B cell (primary cell): ENCODE measurements at regions of chr1 and their contacts with region 1.

Region 1: DNA sequence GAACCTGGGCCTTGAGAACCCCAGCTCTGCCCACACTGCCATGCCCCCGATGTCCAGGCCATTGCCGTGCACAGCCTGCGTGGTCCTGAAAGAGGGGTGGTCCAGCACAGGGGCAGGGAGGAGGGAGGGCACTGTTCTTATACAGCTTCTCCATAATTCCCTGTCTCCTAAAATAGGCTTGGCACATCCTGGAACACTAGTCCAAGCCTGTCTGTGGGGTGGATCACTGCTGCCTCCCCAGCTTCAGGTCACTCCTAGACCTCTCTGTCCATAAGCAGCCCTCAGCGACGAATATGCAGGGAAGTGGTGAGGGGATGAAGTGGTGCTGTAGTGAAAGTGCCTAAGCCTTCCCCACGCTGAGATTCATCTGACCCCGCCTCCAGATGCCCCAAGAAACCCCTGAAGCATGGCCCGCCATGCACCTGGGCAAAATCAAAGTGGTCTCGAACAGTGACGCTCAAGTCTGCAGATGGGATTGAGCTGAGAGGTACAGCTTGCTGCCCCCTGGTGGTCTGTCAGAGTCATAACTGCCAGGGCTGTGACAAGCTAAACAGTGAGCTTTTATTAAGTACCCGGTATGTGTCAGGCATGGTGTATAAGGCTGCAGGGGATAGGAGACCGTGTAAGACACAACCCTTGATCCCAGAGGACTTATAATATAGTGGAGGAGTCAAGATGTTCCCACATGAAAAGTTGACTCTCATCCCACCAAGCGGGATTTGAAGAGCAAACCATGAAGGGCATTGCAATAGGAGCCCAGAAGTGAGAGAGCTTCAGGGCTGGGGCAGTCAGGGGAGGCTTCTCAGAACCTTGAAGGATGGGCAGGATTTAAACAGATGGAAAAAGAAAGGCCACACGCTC is 66.6 kb downstream of the FAM163A start:
- DNase-seq: peak; percentile 78
- ATAC-seq: peak; percentile 70
- H3K4me3 ChIP-seq: no peak overlapping the region
- H3K4me3 Mint-ChIP-seq: no peak overlapping the region
- H3K27ac ChIP-seq: no peak overlapping the region
- H3K27ac Mint-ChIP-seq: no peak overlapping the region
- H3K4me1 ChIP-seq: peaks cover 6 to 13% of the 10 kb centered on the region in 2 donors
- H3K4me1 Mint-ChIP-seq: peaks cover 7% of the 10 kb centered on the region
- H3K27me3 ChIP-seq: peaks cover 0 to 15% (median 4%) of the 10 kb centered on the region in 4 experiments
- H3K27me3 Mint-ChIP-seq: peaks cover 21% of the 10 kb centered on the region
- CTCF ChIP-seq: peak; percentile 90

Region 2: DNA sequence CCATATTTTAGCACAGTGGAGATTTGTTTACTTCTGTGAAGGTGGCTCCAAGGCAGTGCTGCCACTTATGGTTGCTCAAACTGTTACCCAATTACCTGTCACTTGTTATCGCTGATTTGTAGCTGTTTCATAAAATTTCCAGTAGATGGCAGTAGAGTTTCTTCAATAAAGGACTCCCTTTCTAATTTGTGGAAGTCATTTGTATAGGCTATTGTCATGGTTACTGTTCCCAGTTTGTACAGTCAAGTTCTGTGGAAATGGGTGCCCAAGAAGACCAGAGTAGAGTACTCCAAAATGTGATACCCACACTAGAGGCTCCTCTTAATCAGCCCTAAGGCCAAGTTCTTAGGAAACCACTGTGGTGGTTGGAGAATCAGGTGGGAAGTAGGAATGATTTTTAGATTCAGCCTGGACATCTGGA is 1499.0 kb before region 1 on chr1:
- CTCF ChIA-PET with region 1: interaction called, 44 read pairs
- POLR2A ChIA-PET with region 1: no interaction called
- intact Hi-C with region 1: no loop called
- DNase-seq: peak; percentile 70
- ATAC-seq: peak; percentile 45
- H3K4me3 ChIP-seq: no peak overlapping the region
- H3K4me3 Mint-ChIP-seq: no peak overlapping the region
- H3K27ac ChIP-seq: no peak overlapping the region
- H3K27ac Mint-ChIP-seq: no peak overlapping the region
- H3K4me1 ChIP-seq: no peaks in the 10 kb centered on the region
- H3K4me1 Mint-ChIP-seq: no peaks in the 10 kb centered on the region
- H3K27me3 ChIP-seq: peaks cover 0 to 3% (median 0%) of the 10 kb centered on the region in 4 experiments
- H3K27me3 Mint-ChIP-seq: peaks cover 10% of the 10 kb centered on the region
- CTCF ChIP-seq: peak; percentile 82

Region 3: DNA sequence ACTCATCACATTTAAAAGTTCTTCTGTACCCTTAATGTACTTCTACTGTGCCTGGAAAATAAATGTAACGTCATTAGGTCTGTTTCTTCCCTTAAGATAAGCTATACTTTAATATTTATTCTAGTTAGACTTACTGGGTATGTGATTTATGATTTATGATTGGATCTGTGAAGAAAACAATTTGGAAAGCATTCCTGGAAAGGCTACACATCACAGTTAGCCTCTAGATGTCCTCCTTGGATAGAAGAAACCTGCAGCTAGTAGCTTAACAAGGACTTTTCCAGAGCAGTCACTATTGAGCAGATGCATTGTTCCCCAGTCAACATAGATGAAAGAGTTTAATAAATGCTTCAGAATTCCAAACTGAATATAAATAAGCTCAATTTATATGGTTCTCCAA is 558.1 kb before region 1 on chr1:
- CTCF ChIA-PET with region 1: interaction called, 15 read pairs
- POLR2A ChIA-PET with region 1: no interaction called
- intact Hi-C with region 1: no loop called
- DNase-seq: no peak
- ATAC-seq: no peak
- H3K4me3 ChIP-seq: no peak overlapping the region
- H3K4me3 Mint-ChIP-seq: no peak overlapping the region
- H3K27ac ChIP-seq: no peak overlapping the region
- H3K27ac Mint-ChIP-seq: no peak overlapping the region
- H3K4me1 ChIP-seq: no peaks in the 10 kb centered on the region
- H3K4me1 Mint-ChIP-seq: no peaks in the 10 kb centered on the region
- H3K27me3 ChIP-seq: no peaks in the 10 kb centered on the region
- H3K27me3 Mint-ChIP-seq: no peaks in the 10 kb centered on the region
- CTCF ChIP-seq: no peak

Region 4: DNA sequence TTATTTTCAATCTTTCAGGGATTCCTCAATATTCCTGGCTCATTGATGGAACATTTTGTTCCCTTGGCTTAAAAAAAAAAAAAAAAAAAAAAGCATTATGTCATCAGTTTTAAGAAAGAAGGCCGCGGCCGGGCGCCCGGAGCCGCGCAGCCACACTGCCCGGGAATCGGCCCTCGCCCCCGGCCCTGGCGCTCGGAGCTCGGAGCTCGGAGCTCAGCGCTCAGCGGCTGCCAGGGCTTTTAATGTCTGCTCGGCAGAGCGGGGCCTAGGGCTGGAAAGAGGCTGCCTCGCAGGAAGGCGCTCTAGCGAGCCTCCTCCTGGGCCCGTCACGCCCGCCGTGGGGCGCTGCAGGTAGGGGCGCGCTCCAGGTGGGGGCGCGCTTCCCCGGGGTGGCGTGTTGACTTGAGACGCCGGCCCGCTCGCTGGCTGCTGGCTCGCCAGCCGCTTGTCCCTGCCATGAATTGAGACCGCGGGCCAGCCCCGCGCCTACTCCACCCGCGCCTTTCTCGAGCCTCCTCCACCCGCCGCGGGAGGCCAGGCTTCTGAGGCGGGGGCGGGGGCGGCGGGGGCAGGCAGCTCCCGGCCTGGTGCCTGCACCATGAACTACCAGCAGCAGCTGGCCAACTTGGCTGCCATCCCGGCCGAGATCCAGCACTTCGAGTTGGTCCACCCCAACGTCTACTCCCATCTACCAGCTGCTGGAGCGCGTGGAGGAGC is 223.5 kb before region 1 on chr1:
- CTCF ChIA-PET with region 1: no interaction called
- POLR2A ChIA-PET with region 1: no interaction called
- intact Hi-C with region 1: no loop called
- DNase-seq: no peak
- ATAC-seq: no peak
- H3K4me3 ChIP-seq: no peak overlapping the region
- H3K4me3 Mint-ChIP-seq: no peak overlapping the region
- H3K27ac ChIP-seq: no peak overlapping the region
- H3K27ac Mint-ChIP-seq: no peak overlapping the region
- H3K4me1 ChIP-seq: no peaks in the 10 kb centered on the region
- H3K4me1 Mint-ChIP-seq: no peaks in the 10 kb centered on the region
- H3K27me3 ChIP-seq: peaks cover 0 to 23% (median 7%) of the 10 kb centered on the region in 4 experiments
- H3K27me3 Mint-ChIP-seq: peaks cover 59% of the 10 kb centered on the region
- CTCF ChIP-seq: no peak

Region 5: GRCh38 chr1:179706339-179706941 is 103.3 kb before region 1 on chr1:
- CTCF ChIA-PET with region 1: interaction called, 89 read pairs
- POLR2A ChIA-PET with region 1: no interaction called
- intact Hi-C with region 1: no loop called
- DNase-seq: peak; percentile 44
- ATAC-seq: no peak
- H3K4me3 ChIP-seq: no peak overlapping the region
- H3K4me3 Mint-ChIP-seq: no peak overlapping the region
- H3K27ac ChIP-seq: no peak overlapping the region
- H3K27ac Mint-ChIP-seq: no peak overlapping the region
- H3K4me1 ChIP-seq: no peaks in the 10 kb centered on the region
- H3K4me1 Mint-ChIP-seq: peaks cover 3% of the 10 kb centered on the region
- H3K27me3 ChIP-seq: peaks cover 0 to 3% (median 0%) of the 10 kb centered on the region in 4 experiments
- H3K27me3 Mint-ChIP-seq: peaks cover 25% of the 10 kb centered on the region
- CTCF ChIP-seq: peak; percentile 76

Region 6: DNA sequence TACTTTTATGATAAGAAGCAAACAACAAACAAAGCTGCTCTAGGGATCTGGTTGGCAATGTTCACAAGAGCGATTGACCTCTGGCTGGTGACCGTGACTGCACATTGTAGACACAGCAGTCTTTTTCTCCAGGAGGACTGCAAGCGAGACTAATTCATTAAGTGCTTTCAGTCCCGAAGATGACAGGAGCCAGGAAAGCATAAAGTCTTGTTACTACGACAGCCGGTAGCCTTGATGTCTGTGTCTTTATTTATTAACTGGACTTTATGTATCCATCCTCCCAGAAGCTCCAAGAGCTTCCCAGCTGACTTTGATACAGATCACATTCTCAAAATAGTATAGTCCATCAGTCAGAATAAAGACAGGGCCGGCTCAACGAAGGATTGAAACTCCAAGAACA is 48.4 kb before region 1 on chr1:
- CTCF ChIA-PET with region 1: interaction called, 11 read pairs
- POLR2A ChIA-PET with region 1: no interaction called
- intact Hi-C with region 1: no loop called
- DNase-seq: no peak
- ATAC-seq: no peak
- H3K4me3 ChIP-seq: no peak overlapping the region
- H3K4me3 Mint-ChIP-seq: no peak overlapping the region
- H3K27ac ChIP-seq: no peak overlapping the region
- H3K27ac Mint-ChIP-seq: no peak overlapping the region
- H3K4me1 ChIP-seq: no peaks in the 10 kb centered on the region
- H3K4me1 Mint-ChIP-seq: no peaks in the 10 kb centered on the region
- H3K27me3 ChIP-seq: no peaks in the 10 kb centered on the region
- H3K27me3 Mint-ChIP-seq: peaks cover 9% of the 10 kb centered on the region
- CTCF ChIP-seq: no peak

Region 7: DNA sequence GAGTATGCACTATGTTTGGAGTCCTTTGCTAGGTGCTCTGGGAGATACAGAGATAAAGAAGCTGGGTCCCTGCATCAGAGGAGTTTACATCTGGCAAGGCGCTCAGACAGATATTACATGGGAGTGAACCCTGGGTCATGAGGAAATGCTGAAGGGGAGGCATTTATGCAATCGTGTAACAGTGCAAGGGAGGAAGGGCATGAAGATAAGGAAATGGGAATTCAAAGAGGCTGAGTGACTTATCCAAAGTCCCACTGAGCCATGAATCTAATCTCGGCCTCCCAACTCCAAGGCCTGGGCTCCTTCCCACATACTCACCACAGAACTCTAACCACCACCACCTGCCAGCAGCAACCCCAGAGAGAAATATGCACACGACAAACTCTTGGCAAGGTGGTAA is 15.1 kb before region 1 on chr1:
- CTCF ChIA-PET with region 1: interaction called, 19 read pairs
- POLR2A ChIA-PET with region 1: no interaction called
- intact Hi-C with region 1: no loop called
- DNase-seq: no peak
- ATAC-seq: no peak
- H3K4me3 ChIP-seq: no peak overlapping the region
- H3K4me3 Mint-ChIP-seq: no peak overlapping the region
- H3K27ac ChIP-seq: no peak overlapping the region
- H3K27ac Mint-ChIP-seq: no peak overlapping the region
- H3K4me1 ChIP-seq: no peaks in the 10 kb centered on the region
- H3K4me1 Mint-ChIP-seq: no peaks in the 10 kb centered on the region
- H3K27me3 ChIP-seq: no peaks in the 10 kb centered on the region
- H3K27me3 Mint-ChIP-seq: peaks cover 15% of the 10 kb centered on the region
- CTCF ChIP-seq: no peak

Region 8: DNA sequence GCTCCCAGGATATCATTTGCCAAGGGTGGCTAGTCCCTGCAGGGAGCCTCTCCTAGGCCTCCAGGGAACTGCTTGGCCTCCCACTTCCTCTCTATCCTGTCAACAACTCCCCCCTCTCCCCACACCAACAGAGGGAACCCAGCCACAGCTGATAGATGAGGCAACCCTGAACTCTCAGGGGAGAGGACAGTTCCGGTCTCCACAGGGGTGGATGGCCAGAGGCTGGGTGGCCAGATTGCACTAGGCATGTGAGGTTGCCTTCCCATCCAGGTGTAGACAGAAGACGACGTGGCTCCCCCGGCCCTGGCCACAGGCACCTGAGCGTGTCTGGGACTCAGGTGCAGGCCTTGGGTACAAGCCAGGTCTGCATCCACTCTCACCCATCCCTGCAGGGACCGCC is 14.5 kb after region 1 on chr1:
- CTCF ChIA-PET with region 1: interaction called, 77 read pairs
- POLR2A ChIA-PET with region 1: no interaction called
- intact Hi-C with region 1: no loop called
- DNase-seq: no peak
- ATAC-seq: no peak
- H3K4me3 ChIP-seq: no peak overlapping the region
- H3K4me3 Mint-ChIP-seq: no peak overlapping the region
- H3K27ac ChIP-seq: no peak overlapping the region
- H3K27ac Mint-ChIP-seq: no peak overlapping the region
- H3K4me1 ChIP-seq: no peaks in the 10 kb centered on the region
- H3K4me1 Mint-ChIP-seq: no peaks in the 10 kb centered on the region
- H3K27me3 ChIP-seq: peaks cover 0 to 4% (median 0%) of the 10 kb centered on the region in 4 experiments
- H3K27me3 Mint-ChIP-seq: peaks cover 11% of the 10 kb centered on the region
- CTCF ChIP-seq: no peak

Region 9: DNA sequence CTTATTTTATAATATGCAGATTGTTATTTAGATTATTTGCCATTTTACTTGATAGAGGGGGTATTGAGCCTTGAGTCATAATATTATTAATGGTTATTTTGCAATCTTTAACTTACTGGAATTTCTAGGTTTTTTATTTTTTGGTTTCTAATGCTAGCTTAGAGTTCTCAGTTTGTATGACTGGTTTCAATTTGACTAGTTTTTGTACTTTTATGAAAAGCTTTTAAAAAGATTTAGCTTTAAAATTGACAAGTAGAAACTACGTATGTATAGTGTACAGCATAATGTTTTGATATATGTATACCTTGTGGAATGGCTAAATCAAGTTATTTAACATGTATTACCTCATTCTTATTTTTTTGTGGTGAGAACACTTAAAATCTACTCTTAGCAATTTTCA is 186.4 kb after region 1 on chr1:
- CTCF ChIA-PET with region 1: no interaction called
- POLR2A ChIA-PET with region 1: no interaction called
- intact Hi-C with region 1: no loop called
- DNase-seq: no peak
- ATAC-seq: no peak
- H3K4me3 ChIP-seq: no peak overlapping the region
- H3K4me3 Mint-ChIP-seq: no peak overlapping the region
- H3K27ac ChIP-seq: no peak overlapping the region
- H3K27ac Mint-ChIP-seq: no peak overlapping the region
- H3K4me1 ChIP-seq: peaks cover 0 to 14% of the 10 kb centered on the region in 2 donors
- H3K4me1 Mint-ChIP-seq: peaks cover 12% of the 10 kb centered on the region
- H3K27me3 ChIP-seq: no peaks in the 10 kb centered on the region
- H3K27me3 Mint-ChIP-seq: no peaks in the 10 kb centered on the region
- CTCF ChIP-seq: no peak

Region 10: DNA sequence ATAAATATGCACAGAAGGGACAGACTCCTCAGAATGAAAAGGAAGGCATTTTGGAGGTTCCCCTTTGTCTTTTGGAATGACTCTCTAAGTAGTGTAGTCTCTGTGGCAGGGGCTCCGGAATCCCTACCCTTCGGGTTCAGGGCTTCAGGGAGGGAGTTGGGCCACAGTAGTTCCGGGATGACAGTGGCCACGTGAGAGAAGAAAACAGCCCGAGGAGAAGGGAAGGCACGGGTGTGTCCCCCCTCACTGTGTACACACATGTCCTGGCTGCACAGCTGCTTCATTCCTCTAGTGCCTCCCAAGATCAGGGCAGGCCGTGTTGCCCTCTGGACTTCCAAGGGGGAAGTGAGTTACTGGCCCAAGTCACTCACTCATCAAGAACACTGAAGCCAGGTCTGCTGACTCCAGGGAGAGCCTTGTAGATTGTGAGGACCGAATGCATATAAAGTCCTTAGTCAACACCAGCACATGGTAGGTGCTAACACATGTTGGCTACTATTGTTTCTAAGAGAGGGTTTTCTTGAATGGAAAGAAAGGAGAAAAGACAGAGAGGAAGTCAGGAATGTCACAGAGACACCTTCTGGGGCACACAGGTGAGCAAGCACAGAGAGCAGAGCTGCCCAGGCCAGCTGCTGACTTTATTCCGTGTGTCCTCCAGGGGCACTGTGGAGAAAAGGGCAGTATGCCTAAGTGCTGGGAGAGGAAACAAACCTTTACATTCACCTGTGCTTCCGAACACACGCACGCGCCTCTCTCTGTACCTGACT is 460.2 kb after region 1 on chr1:
- CTCF ChIA-PET with region 1: no interaction called
- POLR2A ChIA-PET with region 1: no interaction called
- intact Hi-C with region 1: no loop called
- DNase-seq: no peak
- ATAC-seq: no peak
- H3K4me3 ChIP-seq: no peak overlapping the region
- H3K4me3 Mint-ChIP-seq: no peak overlapping the region
- H3K27ac ChIP-seq: no peak overlapping the region
- H3K27ac Mint-ChIP-seq: no peak overlapping the region
- H3K4me1 ChIP-seq: no peaks in the 10 kb centered on the region
- H3K4me1 Mint-ChIP-seq: no peaks in the 10 kb centered on the region
- H3K27me3 ChIP-seq: no peaks in the 10 kb centered on the region
- H3K27me3 Mint-ChIP-seq: no peaks in the 10 kb centered on the region
- CTCF ChIP-seq: no peak